ENCODE measurements at regions of chr11 and their contacts with region 1.

Region 1: GRCh38 chr11:66119348-66120133 is 49.5 kb downstream of the PACS1 start:
- DNase-seq: no peak
- ATAC-seq: no peak
- H3K4me3 ChIP-seq: no peak overlapping the region
- H3K4me3 Mint-ChIP-seq: no peak overlapping the region
- H3K27ac ChIP-seq: no peak overlapping the region
- H3K27ac Mint-ChIP-seq: peak overlapping the region; percentile 91 to 92
- H3K4me1 ChIP-seq: peaks cover 46% of the 10 kb centered on the region
- H3K4me1 Mint-ChIP-seq: peaks cover 65 to 75% of the 10 kb centered on the region in 2 donors
- H3K27me3 ChIP-seq: no peaks in the 10 kb centered on the region
- H3K27me3 Mint-ChIP-seq: no peaks in the 10 kb centered on the region
- CTCF ChIP-seq: no peak

Region 2: GRCh38 chr11:65888163-65888814 is 231.3 kb before region 1 on chr11 and contains the start of gene FIBP:
- intact Hi-C with region 1: no loop called
- DNase-seq: peak; percentile 88 to 97
- ATAC-seq: peak; percentile 60 to 79 (median 64)
- H3K4me3 ChIP-seq: peak within 1 kb of the TSS; percentile 72
- H3K4me3 Mint-ChIP-seq: peak within 1 kb of the TSS; percentile 88
- H3K27ac ChIP-seq: peak within 1 kb of the TSS; percentile 97
- H3K27ac Mint-ChIP-seq: peak within 1 kb of the TSS; percentile 88 to 96
- H3K4me1 ChIP-seq: peaks cover 72% of the 10 kb centered on the region
- H3K4me1 Mint-ChIP-seq: peaks cover 60 to 68% of the 10 kb centered on the region in 2 donors
- H3K27me3 ChIP-seq: no peaks in the 10 kb centered on the region
- H3K27me3 Mint-ChIP-seq: no peaks in the 10 kb centered on the region
- CTCF ChIP-seq: peak; percentile 90
- total RNA-seq, gene FIBP: 36.5 to 47.9 (median 45.7) TPM

Region 3: GRCh38 chr11:66100272-66101065 is 19.1 kb before region 1 on chr11:
- intact Hi-C with region 1: loop called (anchors 2 kb)
- DNase-seq: peak; percentile 48 to 87
- ATAC-seq: peak; percentile 85 to 92 (median 87)
- H3K4me3 ChIP-seq: peak overlapping the region; percentile 20
- H3K4me3 Mint-ChIP-seq: peak overlapping the region; percentile 76
- H3K27ac ChIP-seq: peak overlapping the region; percentile 75
- H3K27ac Mint-ChIP-seq: peak overlapping the region; percentile 85 to 87
- H3K4me1 ChIP-seq: peaks cover 26% of the 10 kb centered on the region
- H3K4me1 Mint-ChIP-seq: peaks cover 37 to 54% of the 10 kb centered on the region in 2 donors
- H3K27me3 ChIP-seq: no peaks in the 10 kb centered on the region
- H3K27me3 Mint-ChIP-seq: no peaks in the 10 kb centered on the region
- CTCF ChIP-seq: no peak

Region 4: GRCh38 chr11:66299186-66299585 is 179.6 kb after region 1 on chr11:
- intact Hi-C with region 1: no loop called
- DNase-seq: no peak
- ATAC-seq: no peak
- H3K4me3 ChIP-seq: no peak overlapping the region
- H3K4me3 Mint-ChIP-seq: no peak overlapping the region
- H3K27ac ChIP-seq: no peak overlapping the region
- H3K27ac Mint-ChIP-seq: no peak overlapping the region
- H3K4me1 ChIP-seq: no peaks in the 10 kb centered on the region
- H3K4me1 Mint-ChIP-seq: no peaks in the 10 kb centered on the region
- H3K27me3 ChIP-seq: no peaks in the 10 kb centered on the region
- H3K27me3 Mint-ChIP-seq: peaks cover 0 to 5% of the 10 kb centered on the region in 2 donors
- CTCF ChIP-seq: no peak

Measured in natural killer cell (primary cell).